ENCODE measurements at regions of chr13 and their contacts with region 1.

Region 1: DNA sequence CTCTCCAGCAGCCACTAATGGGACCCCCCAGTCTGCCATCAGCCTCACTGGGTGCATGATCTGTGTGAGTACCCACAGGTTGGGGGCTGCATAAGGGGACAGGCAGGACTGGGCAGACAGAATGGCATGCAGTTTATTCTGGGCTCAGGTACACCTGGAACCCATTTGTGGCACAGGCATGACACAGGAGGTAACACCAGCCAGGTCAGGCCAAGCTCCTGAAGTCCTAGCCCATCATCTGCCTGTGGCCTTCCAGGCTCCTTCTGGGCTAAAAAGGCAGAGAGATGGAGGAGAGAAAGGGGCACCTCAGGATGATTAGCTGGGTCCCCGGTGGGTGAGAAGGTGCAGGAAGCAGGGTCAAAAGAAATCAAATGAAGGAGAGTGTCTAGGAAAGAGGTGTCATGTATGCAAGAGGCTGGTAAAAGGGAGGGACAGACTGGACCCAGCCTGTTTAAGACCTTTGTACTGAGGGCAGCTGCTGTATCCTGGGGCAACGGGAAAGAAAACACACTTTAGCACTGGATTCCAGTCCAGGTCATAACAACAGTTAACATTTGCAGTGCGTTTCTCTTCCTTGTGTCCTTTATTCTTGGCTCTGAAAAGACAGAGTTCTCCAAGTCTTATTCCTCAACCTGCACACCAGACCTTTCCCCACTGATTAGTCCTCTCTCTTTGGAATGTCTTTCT is 20.2 kb upstream of the DGKH start:
- DNase-seq: peak; percentile 71 to 74
- H3K4me3 ChIP-seq: no peak overlapping the region
- H3K4me3 Mint-ChIP-seq: peak overlapping the region; percentile 8
- H3K27ac Mint-ChIP-seq: peak overlapping the region; percentile 70
- H3K4me1 ChIP-seq: peaks cover 19% of the 10 kb centered on the region
- H3K4me1 Mint-ChIP-seq: peaks cover 18% of the 10 kb centered on the region
- H3K27me3 ChIP-seq: no peaks in the 10 kb centered on the region
- H3K27me3 Mint-ChIP-seq: no peaks in the 10 kb centered on the region
- CTCF ChIP-seq: no peak

Region 2: GRCh38 chr13:41848435-41849255 is 179.6 kb before region 1 on chr13:
- CTCF ChIA-PET with region 1: no interaction called
- POLR2A ChIA-PET with region 1: no interaction called
- intact Hi-C with region 1: no loop called
- DNase-seq: peak in 1 of 2 experiments; percentile 7
- H3K4me3 ChIP-seq: no peak overlapping the region
- H3K4me3 Mint-ChIP-seq: no peak overlapping the region
- H3K27ac Mint-ChIP-seq: no peak overlapping the region
- H3K4me1 ChIP-seq: no peaks in the 10 kb centered on the region
- H3K4me1 Mint-ChIP-seq: no peaks in the 10 kb centered on the region
- H3K27me3 ChIP-seq: no peaks in the 10 kb centered on the region
- H3K27me3 Mint-ChIP-seq: no peaks in the 10 kb centered on the region
- CTCF ChIP-seq: no peak

Region 3: DNA sequence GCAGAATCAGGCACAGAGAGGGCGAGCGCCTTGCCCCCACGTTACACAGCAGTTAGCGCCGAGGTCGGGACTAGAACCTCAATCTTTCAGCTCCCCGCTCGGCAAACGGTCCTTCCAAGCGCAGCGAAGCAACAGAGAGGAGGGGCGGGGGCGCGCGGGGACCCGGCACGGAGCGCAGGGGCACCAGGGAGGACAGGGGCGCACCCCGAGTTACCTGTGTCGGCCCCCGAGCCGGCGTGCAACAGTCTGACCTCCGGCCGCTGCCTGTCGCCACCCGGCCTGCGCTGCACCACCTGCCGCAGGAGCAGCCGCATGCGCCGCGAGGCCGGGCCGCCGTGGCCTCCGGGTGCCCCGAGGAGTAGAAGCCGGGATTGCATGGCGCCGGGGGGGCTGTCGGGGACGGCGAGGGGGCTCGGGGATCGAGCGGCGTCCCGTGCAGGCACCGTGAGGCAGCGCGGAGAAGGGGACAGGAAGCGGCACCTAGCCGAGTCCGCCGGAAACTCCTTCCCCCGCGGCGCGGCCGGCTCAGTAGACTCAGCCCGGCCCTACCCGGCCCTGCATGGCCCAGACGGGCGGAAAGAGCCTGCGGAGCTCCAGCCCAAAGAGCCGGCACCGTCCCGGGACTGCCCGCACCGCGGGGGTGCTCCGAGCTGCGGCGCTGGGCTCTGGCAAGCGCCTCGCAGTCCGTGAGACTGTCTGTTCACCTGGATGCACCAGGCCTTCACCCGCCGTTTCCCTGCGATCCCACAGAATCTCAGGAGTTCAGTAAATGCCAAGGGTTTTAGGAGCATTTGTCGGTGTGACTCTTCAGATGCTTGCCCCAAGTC is 67.4 kb before region 1 on chr13 and contains the start of gene VWA8:
- CTCF ChIA-PET with region 1: no interaction called
- POLR2A ChIA-PET with region 1: no interaction called
- intact Hi-C with region 1: loop called (anchors 5 kb)
- DNase-seq: peak; percentile 85 to 90
- H3K4me3 ChIP-seq: peak within 1 kb of the TSS; percentile 78
- H3K4me3 Mint-ChIP-seq: peak within 1 kb of the TSS; percentile 88
- H3K27ac Mint-ChIP-seq: peak within 1 kb of the TSS; percentile 84
- H3K4me1 ChIP-seq: peaks cover 11% of the 10 kb centered on the region; the same call in 1 of the 2 replicates
- H3K4me1 Mint-ChIP-seq: peaks cover 14% of the 10 kb centered on the region
- H3K27me3 ChIP-seq: no peaks in the 10 kb centered on the region
- H3K27me3 Mint-ChIP-seq: no peaks in the 10 kb centered on the region
- CTCF ChIP-seq: no peak
- total RNA-seq, gene VWA8: 20.7 and 20.9 TPM in 2 replicates

Region 4: GRCh38 chr13:42148538-42148937 is 120.3 kb after region 1 on chr13:
- CTCF ChIA-PET with region 1: no interaction called
- POLR2A ChIA-PET with region 1: no interaction called
- intact Hi-C with region 1: no loop called
- DNase-seq: no peak
- H3K4me3 ChIP-seq: no peak overlapping the region
- H3K4me3 Mint-ChIP-seq: no peak overlapping the region
- H3K27ac Mint-ChIP-seq: no peak overlapping the region
- H3K4me1 ChIP-seq: no peaks in the 10 kb centered on the region
- H3K4me1 Mint-ChIP-seq: peaks cover 2% of the 10 kb centered on the region
- H3K27me3 ChIP-seq: no peaks in the 10 kb centered on the region
- H3K27me3 Mint-ChIP-seq: no peaks in the 10 kb centered on the region
- CTCF ChIP-seq: no peak

Measured in Caco-2 (cell line).